Panc1 (cell line): ENCODE measurements at regions of chr9 and their contacts with region 1.

Region 1: GRCh38 chr9:122125158-122125508 is 32.0 kb upstream of the TTLL11 start:
- DNase-seq: peak; percentile 38
- ATAC-seq: peak; percentile 86
- H3K4me3 ChIP-seq: no peak overlapping the region
- H3K27ac ChIP-seq: no peak overlapping the region
- H3K4me1 ChIP-seq: no peaks in the 10 kb centered on the region; the same call in 1 of the 2 replicates
- H3K27me3 ChIP-seq: no peaks in the 10 kb centered on the region
- CTCF ChIP-seq: peak; percentile 90

Region 2: DNA sequence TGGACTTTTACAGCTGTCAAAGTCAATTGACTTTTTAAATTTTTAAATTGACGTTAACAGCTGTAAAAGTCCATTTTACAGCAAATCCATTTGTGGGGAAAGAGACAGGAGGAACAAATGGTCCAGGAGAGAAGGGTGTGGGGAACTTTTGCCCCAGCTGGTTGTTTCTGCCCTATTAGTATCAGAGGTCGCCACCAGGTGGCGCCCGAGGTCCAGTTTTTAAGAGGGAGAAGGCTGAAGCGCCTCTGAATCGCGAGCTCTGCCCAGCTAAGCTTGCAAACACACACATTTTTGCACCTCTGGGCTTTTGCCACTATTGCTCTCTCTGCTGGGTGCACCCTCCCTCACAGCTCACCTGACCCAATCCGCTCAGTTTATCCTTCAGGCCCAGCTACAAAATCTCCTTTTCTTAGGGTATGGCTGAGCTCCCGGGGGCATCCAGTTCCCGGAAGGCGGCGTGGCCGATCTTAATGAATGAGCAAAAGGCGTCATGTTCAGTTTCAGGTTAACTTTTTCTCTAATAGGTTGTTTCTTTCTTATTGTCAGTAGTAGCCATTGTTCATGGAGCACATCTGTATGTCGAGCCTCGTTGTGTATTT is 25.8 kb before region 1 on chr9:
- CTCF ChIA-PET with region 1: interaction called, 33 read pairs
- POLR2A ChIA-PET with region 1: no interaction called
- in situ Hi-C with region 1: no loop called
- intact Hi-C with region 1: loop called (anchors 2 kb)
- DNase-seq: peak; percentile 32
- ATAC-seq: peak; percentile 90
- H3K4me3 ChIP-seq: no peak overlapping the region
- H3K27ac ChIP-seq: no peak overlapping the region
- H3K4me1 ChIP-seq: no peaks in the 10 kb centered on the region
- H3K27me3 ChIP-seq: no peaks in the 10 kb centered on the region
- CTCF ChIP-seq: peak; percentile 80

Region 3: GRCh38 chr9:122144836-122145591 is 19.9 kb after region 1 on chr9:
- CTCF ChIA-PET with region 1: no interaction called
- POLR2A ChIA-PET with region 1: no interaction called
- in situ Hi-C with region 1: no loop called
- intact Hi-C with region 1: no loop called
- DNase-seq: no peak
- ATAC-seq: no peak
- H3K4me3 ChIP-seq: no peak overlapping the region
- H3K27ac ChIP-seq: no peak overlapping the region
- H3K4me1 ChIP-seq: no peaks in the 10 kb centered on the region
- H3K27me3 ChIP-seq: no peaks in the 10 kb centered on the region
- CTCF ChIP-seq: peak; percentile 62

Region 4: DNA sequence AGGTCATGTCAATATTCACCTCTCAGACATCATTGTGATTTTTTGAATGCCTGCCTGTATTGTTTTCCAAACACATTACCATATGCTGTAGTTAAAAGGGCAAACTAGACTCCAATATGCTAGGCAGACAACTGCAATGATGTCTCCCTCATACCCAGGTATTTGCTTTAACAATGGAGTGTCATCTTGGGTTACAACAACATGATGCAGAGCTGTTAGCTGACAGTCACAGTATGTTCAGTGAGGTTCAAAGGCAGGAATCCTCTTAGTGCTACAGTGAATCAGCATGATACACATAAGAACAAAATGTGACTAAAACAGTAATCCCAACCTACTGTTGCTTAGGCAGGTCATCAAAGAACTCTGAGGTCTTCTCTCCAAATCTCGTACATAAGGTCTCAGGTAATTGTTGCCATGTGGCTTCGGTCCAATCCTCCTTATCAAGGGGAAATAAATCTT is 328.6 kb after region 1 on chr9:
- CTCF ChIA-PET with region 1: no interaction called
- POLR2A ChIA-PET with region 1: no interaction called
- in situ Hi-C with region 1: no loop called
- intact Hi-C with region 1: loop called (anchors 5 kb)
- DNase-seq: no peak
- ATAC-seq: no peak
- H3K4me3 ChIP-seq: no peak overlapping the region
- H3K27ac ChIP-seq: no peak overlapping the region
- H3K4me1 ChIP-seq: no peaks in the 10 kb centered on the region
- H3K27me3 ChIP-seq: 0 out of 2 replicates have a peak, but pooled peaks cover 2% of the 10 kb centered on the region
- CTCF ChIP-seq: no peak

Region 5: DNA sequence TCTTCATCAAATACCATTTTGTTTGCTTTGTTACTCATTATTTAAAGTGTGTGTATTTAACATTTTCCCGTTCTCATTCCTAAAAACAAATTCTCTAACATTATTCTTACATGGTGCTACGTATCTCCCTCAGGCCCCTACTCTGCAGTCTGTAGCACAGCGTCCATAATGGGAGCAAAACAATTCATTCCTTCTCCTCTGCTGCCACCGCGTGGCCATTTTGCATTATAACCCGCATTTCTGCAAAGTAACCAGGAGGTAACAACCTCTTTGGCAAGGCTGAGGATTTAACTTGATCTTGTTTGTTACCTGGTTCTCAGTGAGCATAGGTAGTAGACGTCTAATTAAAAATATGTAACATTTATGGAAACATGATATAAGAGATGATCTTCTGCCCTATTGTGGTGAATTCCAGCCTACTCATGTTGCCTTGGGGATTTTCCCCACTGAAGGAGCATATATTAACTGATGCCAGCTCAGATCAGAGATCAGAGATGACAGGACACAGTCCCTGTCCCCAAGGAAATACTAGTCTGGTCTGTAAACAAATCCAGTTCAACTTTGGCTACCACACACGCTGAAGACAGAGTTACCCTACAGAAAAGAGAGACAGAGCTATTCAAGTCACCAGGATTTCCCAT is 685.3 kb after region 1 on chr9:
- CTCF ChIA-PET with region 1: no interaction called
- POLR2A ChIA-PET with region 1: no interaction called
- in situ Hi-C with region 1: no loop called
- intact Hi-C with region 1: loop called (anchors 10 kb)
- DNase-seq: peak; percentile 47
- ATAC-seq: peak; percentile 95
- H3K4me3 ChIP-seq: no peak overlapping the region
- H3K27ac ChIP-seq: no peak overlapping the region
- H3K4me1 ChIP-seq: no peaks in the 10 kb centered on the region
- H3K27me3 ChIP-seq: no peaks in the 10 kb centered on the region
- CTCF ChIP-seq: peak; percentile 73